Naive thymus-derived CD4-positive, alpha-beta T cell (primary cell): ENCODE measurements at regions of chr17 and their contacts with region 1.

Region 1: DNA sequence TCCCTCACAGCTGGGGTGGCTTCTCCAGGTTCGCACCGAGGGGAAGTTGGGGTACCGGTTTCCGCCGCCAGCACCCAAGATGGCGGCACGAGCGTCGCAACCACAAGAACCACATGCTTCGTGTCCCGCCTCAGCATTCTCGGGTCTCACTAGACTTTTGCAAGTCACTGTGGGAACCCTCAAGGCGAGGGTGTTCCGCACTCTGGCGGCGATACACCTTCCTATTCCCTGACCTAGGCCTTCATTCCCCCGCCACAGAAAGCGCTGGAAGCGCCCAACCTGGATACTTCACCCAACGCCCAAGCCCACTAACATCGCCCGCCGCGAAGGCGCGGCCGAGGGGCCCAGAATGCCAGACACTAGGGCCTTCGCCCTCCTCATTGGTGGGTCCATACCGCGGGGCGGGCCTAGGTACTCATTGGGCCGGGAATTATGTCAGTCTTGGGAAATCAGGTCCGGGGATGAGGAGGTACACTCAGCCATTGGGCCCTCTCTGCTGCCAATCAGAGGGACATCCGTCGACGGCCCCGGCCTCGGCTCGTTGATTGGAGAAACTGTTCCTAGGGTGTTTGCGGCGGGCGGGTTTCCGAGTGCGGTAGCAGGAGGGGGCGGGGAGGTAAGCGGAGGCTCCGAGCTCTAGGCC is at the start of gene NFE2L1:
- DNase-seq: peak; percentile 86 to 99 (median 98)
- ATAC-seq: peak; percentile 98
- H3K4me3 ChIP-seq: peak within 1 kb of the TSS; percentile 78
- H3K4me3 Mint-ChIP-seq: peak within 1 kb of the TSS; percentile 79 to 100 (median 94)
- H3K27ac ChIP-seq: peak within 1 kb of the TSS; percentile 87
- H3K27ac Mint-ChIP-seq: peak within 1 kb of the TSS; percentile 92 to 99 (median 98)
- H3K4me1 ChIP-seq: peaks cover 18 to 19% of the 10 kb centered on the region in 2 donors
- H3K4me1 Mint-ChIP-seq: peaks cover 37 to 68% (median 61%) of the 10 kb centered on the region in 7 donors
- H3K27me3 ChIP-seq: no peaks in the 10 kb centered on the region
- H3K27me3 Mint-ChIP-seq: no peaks in the 10 kb centered on the region
- total RNA-seq, gene NFE2L1: 34.7 to 65.2 (median 49.2) TPM

Region 2: GRCh38 chr17:47895856-47896671 is 151.8 kb before region 1 on chr17 and contains the start of gene SP2:
- CTCF ChIA-PET with region 1: no interaction called
- POLR2A ChIA-PET with region 1: interaction called, 5 read pairs
- intact Hi-C with region 1: loop called (anchors 1 kb)
- DNase-seq: peak; percentile 96 to 100 (median 100)
- ATAC-seq: peak; percentile 92
- H3K4me3 ChIP-seq: peak within 1 kb of the TSS; percentile 80
- H3K4me3 Mint-ChIP-seq: peak within 1 kb of the TSS; percentile 88 to 100 (median 97)
- H3K27ac ChIP-seq: peak within 1 kb of the TSS; percentile 98
- H3K27ac Mint-ChIP-seq: peak within 1 kb of the TSS; percentile 98 to 100 (median 99)
- H3K4me1 ChIP-seq: peaks cover 20 to 23% of the 10 kb centered on the region in 2 donors
- H3K4me1 Mint-ChIP-seq: peaks cover 31 to 66% (median 57%) of the 10 kb centered on the region in 7 donors
- H3K27me3 ChIP-seq: no peaks in the 10 kb centered on the region
- H3K27me3 Mint-ChIP-seq: peaks cover 0 to 4% (median 0%) of the 10 kb centered on the region in 5 donors
- total RNA-seq, gene SP2: 25.2 to 36.5 (median 30.8) TPM

Region 3: GRCh38 chr17:47987240-47987835 is 60.5 kb before region 1 on chr17:
- CTCF ChIA-PET with region 1: no interaction called
- POLR2A ChIA-PET with region 1: no interaction called
- intact Hi-C with region 1: no loop called
- DNase-seq: no peak
- ATAC-seq: no peak
- H3K4me3 ChIP-seq: no peak overlapping the region
- H3K4me3 Mint-ChIP-seq: no peak overlapping the region
- H3K27ac ChIP-seq: no peak overlapping the region
- H3K27ac Mint-ChIP-seq: no peak overlapping the region
- H3K4me1 ChIP-seq: no peaks in the 10 kb centered on the region
- H3K4me1 Mint-ChIP-seq: peaks cover 0 to 14% (median 0%) of the 10 kb centered on the region in 7 donors
- H3K27me3 ChIP-seq: no peaks in the 10 kb centered on the region
- H3K27me3 Mint-ChIP-seq: peaks cover 0 to 2% (median 0%) of the 10 kb centered on the region in 5 donors

Region 4: GRCh38 chr17:48011405-48012150 is 36.3 kb before region 1 on chr17:
- CTCF ChIA-PET with region 1: no interaction called
- POLR2A ChIA-PET with region 1: interaction called, 3 read pairs
- intact Hi-C with region 1: loop called in 1 of 2 experiments (anchors 1 kb)
- DNase-seq: peak in 7 of 9 donors; percentile 20 to 34 (median 32)
- ATAC-seq: peak; percentile 74
- H3K4me3 ChIP-seq: peak overlapping the region; percentile 47
- H3K4me3 Mint-ChIP-seq: peak overlapping the region; percentile 70 to 90 (median 78)
- H3K27ac ChIP-seq: no peak overlapping the region
- H3K27ac Mint-ChIP-seq: peak overlapping the region in 1 of 9 donors; percentile 48
- H3K4me1 ChIP-seq: peaks cover 9% of the 10 kb centered on the region in 2 donors
- H3K4me1 Mint-ChIP-seq: peaks cover 9 to 25% (median 13%) of the 10 kb centered on the region in 7 donors
- H3K27me3 ChIP-seq: peaks cover 7 to 10% of the 10 kb centered on the region in 2 donors
- H3K27me3 Mint-ChIP-seq: peaks cover 44 to 66% (median 55%) of the 10 kb centered on the region in 5 donors

Region 5: DNA sequence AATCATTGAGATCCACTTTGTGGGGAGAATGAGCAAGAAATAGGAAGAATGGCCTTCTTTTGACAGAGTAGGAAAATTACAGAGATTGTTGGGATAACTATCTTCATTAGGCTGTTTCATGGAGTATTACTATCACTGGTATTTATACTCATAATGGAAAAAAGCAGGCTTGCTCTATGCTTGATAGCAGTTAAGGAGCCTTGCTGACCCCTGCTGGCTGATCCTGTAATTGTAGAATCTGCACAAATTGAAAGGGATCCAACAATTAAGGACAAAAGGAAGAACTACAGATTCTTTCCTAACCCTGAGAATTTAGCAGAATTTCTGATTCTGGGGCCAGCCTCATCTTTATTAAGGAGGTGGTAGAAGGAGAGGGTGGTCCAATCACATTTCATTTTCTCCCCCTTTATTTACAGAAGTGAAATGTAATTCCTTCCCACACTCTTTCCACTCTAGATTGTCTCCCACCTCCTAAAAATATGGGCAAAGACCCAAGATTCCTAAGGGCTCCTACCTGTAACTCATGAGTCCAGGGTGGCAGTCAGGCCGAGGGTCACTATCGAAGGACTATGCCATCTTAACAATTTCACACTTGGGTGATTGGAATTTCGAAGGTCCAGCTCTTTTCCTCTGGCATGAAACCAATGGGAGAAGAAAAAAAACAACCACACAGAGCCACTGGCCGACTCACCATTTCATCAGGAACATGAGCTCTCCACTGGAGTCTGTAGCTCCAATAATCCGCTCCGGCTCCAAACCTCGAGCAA is 26.6 kb after region 1 on chr17:
- CTCF ChIA-PET with region 1: interaction called, 28 read pairs
- POLR2A ChIA-PET with region 1: interaction called, 7 read pairs
- intact Hi-C with region 1: loop called (anchors 1 kb)
- DNase-seq: peak; percentile 21 to 74 (median 65)
- ATAC-seq: peak; percentile 85
- H3K4me3 ChIP-seq: no peak overlapping the region
- H3K4me3 Mint-ChIP-seq: no peak overlapping the region
- H3K27ac ChIP-seq: no peak overlapping the region
- H3K27ac Mint-ChIP-seq: peak overlapping the region in 2 of 9 donors; percentile 9 to 25
- H3K4me1 ChIP-seq: no peaks in the 10 kb centered on the region
- H3K4me1 Mint-ChIP-seq: peaks cover 0 to 8% (median 0%) of the 10 kb centered on the region in 7 donors
- H3K27me3 ChIP-seq: no peaks in the 10 kb centered on the region
- H3K27me3 Mint-ChIP-seq: no peaks in the 10 kb centered on the region

Region 6: DNA sequence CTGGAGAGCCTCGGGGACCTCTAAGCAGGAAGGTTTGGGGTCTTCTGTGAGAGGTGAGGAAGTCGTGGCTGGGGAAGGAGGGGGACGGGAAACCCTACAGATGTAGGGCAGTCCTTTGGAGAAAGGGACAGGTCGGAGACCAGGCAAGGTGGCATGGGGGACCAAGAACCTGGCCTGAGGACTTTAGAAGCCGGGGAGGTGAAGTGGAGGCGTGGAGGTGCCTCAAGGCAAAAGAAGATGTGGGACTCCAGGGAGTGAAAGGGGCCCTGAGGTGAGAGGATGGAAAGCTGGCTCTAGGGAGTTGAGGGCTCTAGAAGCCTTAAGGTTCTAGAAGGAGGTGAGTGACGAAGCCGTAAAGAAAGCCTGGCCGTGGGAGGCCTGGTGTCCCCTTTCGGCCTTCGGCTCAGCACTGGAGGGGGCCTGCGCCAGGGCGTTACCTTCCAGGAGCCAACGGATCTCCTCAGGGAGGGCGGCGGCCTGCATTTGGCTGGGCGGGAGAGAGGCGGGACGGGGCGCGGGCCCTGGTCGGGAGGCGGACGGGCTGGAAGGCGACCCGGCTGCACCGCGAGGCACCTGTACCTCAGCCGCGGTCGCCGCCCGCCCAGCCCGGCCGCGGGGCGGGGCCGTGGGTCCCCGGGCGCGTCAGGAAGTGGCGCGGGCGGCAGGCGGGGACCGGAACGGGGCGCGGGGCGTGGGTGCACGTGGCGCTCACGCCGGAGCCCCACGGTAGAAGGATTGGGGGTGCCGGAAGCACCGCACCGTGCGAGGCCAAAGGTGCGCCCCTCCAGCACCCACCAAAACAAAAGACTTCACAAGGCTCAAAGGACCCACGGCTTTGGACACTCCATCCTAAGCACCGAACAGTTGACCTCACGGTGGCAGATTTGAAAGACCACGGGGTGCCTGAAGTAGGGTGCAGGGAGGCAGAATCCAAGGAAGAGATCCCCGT is 382.1 kb after region 1 on chr17 and contains the start of gene SKAP1:
- CTCF ChIA-PET with region 1: no interaction called
- POLR2A ChIA-PET with region 1: interaction called, 3 read pairs
- intact Hi-C with region 1: loop called in 1 of 2 experiments (anchors 5 kb)
- DNase-seq: peak; percentile 52 to 80 (median 62)
- ATAC-seq: peak; percentile 84
- H3K4me3 ChIP-seq: peak within 1 kb of the TSS; percentile 92
- H3K4me3 Mint-ChIP-seq: peak within 1 kb of the TSS; percentile 90 to 100 (median 98)
- H3K27ac ChIP-seq: peak within 1 kb of the TSS; percentile 97
- H3K27ac Mint-ChIP-seq: peak within 1 kb of the TSS; percentile 91 to 99 (median 98)
- H3K4me1 ChIP-seq: peaks cover 36 to 58% of the 10 kb centered on the region in 2 donors
- H3K4me1 Mint-ChIP-seq: peaks cover 50 to 93% (median 82%) of the 10 kb centered on the region in 7 donors
- H3K27me3 ChIP-seq: no peaks in the 10 kb centered on the region
- H3K27me3 Mint-ChIP-seq: no peaks in the 10 kb centered on the region
- total RNA-seq, gene SKAP1: 99.3 to 117 (median 109) TPM

Region 7: GRCh38 chr17:49191917-49192741 is 1144.3 kb after region 1 on chr17:
- CTCF ChIA-PET with region 1: no interaction called
- POLR2A ChIA-PET with region 1: no interaction called
- intact Hi-C with region 1: loop called in 1 of 2 experiments (anchors 5 kb)
- DNase-seq: peak in 8 of 9 donors; percentile 75 to 96 (median 94)
- ATAC-seq: peak; percentile 71
- H3K4me3 ChIP-seq: peak overlapping the region; percentile 88
- H3K4me3 Mint-ChIP-seq: peak overlapping the region; percentile 84 to 98 (median 95)
- H3K27ac ChIP-seq: peak overlapping the region; percentile 87
- H3K27ac Mint-ChIP-seq: peak overlapping the region; percentile 96 to 99 (median 98)
- H3K4me1 ChIP-seq: peaks cover 6% of the 10 kb centered on the region in 2 donors
- H3K4me1 Mint-ChIP-seq: peaks cover 16 to 57% (median 27%) of the 10 kb centered on the region in 7 donors
- H3K27me3 ChIP-seq: no peaks in the 10 kb centered on the region
- H3K27me3 Mint-ChIP-seq: peaks cover 0 to 6% (median 0%) of the 10 kb centered on the region in 5 donors